HEK293 (cell line): ENCODE measurements at regions of chr2 and their contacts with region 1.

Region 1: GRCh38 chr2:174697255-174697654 is 67.0 kb downstream of the CHRNA1 start:
- H3K4me3 ChIP-seq: no peak overlapping the region
- H3K27ac ChIP-seq: no peak overlapping the region
- H3K4me1 ChIP-seq: no peaks in the 10 kb centered on the region
- CTCF ChIP-seq: peak; percentile 74

Region 2: DNA sequence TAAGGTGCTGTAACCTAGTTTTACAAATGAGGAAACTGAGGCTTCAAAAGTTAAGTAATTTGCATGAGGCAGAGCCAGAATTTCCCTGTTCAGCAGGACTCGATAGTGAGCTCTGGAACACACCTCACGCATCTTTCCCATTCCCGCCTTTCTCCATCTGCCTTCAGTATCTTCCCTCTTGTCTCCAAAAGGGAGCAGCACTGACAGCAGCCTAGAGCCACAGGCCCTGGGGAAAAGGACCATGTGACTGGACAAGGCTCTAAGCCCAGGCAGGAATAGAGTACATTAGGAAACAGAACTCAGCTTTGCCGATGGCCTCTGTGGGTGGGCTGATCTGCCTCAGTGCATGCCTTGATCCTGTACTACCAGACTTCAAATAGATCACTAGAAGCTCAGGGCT is 231.9 kb before region 1 on chr2:
- CTCF ChIA-PET with region 1: interaction called, 39 read pairs
- POLR2A ChIA-PET with region 1: no interaction called
- H3K4me3 ChIP-seq: no peak overlapping the region
- H3K27ac ChIP-seq: no peak overlapping the region
- H3K4me1 ChIP-seq: no peaks in the 10 kb centered on the region
- CTCF ChIP-seq: no peak

Region 3: GRCh38 chr2:174682578-174683391 is 14.5 kb before region 1 on chr2:
- CTCF ChIA-PET with region 1: interaction called, 93 read pairs
- POLR2A ChIA-PET with region 1: no interaction called
- H3K4me3 ChIP-seq: peak overlapping the region; percentile 81
- H3K27ac ChIP-seq: peak overlapping the region; percentile 67; the same call in 1 of the 2 replicates
- H3K4me1 ChIP-seq: peaks cover 12% of the 10 kb centered on the region
- CTCF ChIP-seq: no peak

Region 4: DNA sequence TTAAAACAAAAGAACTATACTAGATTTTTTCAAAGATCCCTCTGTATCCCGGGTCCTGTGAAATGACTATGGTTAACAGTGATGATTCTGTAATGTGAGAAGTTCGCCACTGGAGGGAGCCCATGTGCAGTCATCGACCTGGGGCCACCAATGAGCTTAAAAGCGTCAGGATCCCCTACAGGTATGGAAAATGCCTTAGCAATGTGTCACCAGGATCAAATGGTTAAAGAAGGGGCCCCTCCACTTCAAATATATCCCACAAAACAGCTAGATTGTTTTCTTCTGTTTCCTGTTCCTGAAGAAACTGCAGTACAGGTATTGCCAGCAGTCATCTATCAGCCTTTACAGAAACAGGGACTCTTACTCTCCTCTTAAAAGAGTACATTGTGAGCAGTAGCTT is 51.7 kb after region 1 on chr2:
- CTCF ChIA-PET with region 1: interaction called, 24 read pairs
- POLR2A ChIA-PET with region 1: no interaction called
- H3K4me3 ChIP-seq: no peak overlapping the region
- H3K27ac ChIP-seq: no peak overlapping the region
- H3K4me1 ChIP-seq: no peaks in the 10 kb centered on the region
- CTCF ChIP-seq: peak; percentile 68

Region 5: GRCh38 chr2:174771631-174772471 is 74.6 kb after region 1 on chr2:
- CTCF ChIA-PET with region 1: interaction called, 16 read pairs
- POLR2A ChIA-PET with region 1: no interaction called
- H3K4me3 ChIP-seq: no peak overlapping the region
- H3K27ac ChIP-seq: no peak overlapping the region
- H3K4me1 ChIP-seq: no peaks in the 10 kb centered on the region
- CTCF ChIP-seq: peak; percentile 84

Region 6: GRCh38 chr2:174901075-174901474 is 203.8 kb after region 1 on chr2:
- CTCF ChIA-PET with region 1: no interaction called
- POLR2A ChIA-PET with region 1: no interaction called
- H3K4me3 ChIP-seq: no peak overlapping the region
- H3K27ac ChIP-seq: no peak overlapping the region
- H3K4me1 ChIP-seq: peaks cover 9% of the 10 kb centered on the region
- CTCF ChIP-seq: no peak

Region 7: GRCh38 chr2:175275539-175275938 is 578.3 kb after region 1 on chr2:
- CTCF ChIA-PET with region 1: interaction called, 10 read pairs
- POLR2A ChIA-PET with region 1: no interaction called
- H3K4me3 ChIP-seq: no peak overlapping the region
- H3K27ac ChIP-seq: no peak overlapping the region
- H3K4me1 ChIP-seq: peaks cover 7% of the 10 kb centered on the region
- CTCF ChIP-seq: no peak